CD4-positive, alpha-beta memory T cell (primary cell): ENCODE measurements at regions of chr22 and their contacts with region 1.

Region 1: DNA sequence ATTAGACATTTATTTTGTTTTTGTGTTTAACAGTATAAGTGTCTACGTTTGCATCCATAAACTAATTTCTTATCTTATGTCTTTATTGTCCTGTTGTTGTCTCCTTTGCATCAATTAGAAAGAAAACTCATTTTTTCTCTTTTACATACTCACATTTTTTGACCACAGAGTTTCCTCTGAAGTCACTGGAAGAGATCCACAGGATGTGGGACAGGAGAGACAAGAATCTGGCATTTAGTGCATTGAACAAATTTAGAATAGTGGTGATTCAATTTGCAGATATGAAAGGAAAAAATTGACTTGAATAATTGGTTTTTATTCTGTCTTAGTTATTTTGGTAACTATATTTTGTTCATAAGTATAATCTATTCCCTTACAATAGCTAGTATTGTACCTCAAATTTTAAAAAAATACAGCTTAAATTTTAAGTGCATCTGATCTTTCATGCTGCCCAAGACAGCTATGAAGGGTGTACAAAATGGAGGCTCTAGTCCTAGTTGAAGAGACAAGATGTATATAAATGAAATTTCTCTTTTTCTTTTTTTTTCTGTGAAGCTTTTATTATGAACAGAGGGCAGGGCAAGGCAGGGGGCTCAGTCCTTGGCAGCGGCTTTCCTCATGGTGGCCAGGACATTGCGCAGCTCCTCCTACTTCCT is 24.4 kb downstream of the HORMAD2 start:
- DNase-seq: peak in 4 of 5 donors; percentile 43 to 64 (median 48)
- H3K4me3 ChIP-seq: no peak overlapping the region
- H3K4me3 Mint-ChIP-seq: peak overlapping the region in 3 of 8 donors; percentile 45 to 78 (median 61)
- H3K27ac ChIP-seq: no peak overlapping the region
- H3K27ac Mint-ChIP-seq: peak overlapping the region in 6 of 7 donors; percentile 6 to 83 (median 50)
- H3K4me1 ChIP-seq: peaks cover 33% of the 10 kb centered on the region
- H3K4me1 Mint-ChIP-seq: peaks cover 21 to 50% (median 34%) of the 10 kb centered on the region in 4 donors
- H3K27me3 ChIP-seq: no peaks in the 10 kb centered on the region
- H3K27me3 Mint-ChIP-seq: no peaks in the 10 kb centered on the region

Region 2: GRCh38 chr22:30121960-30122359 is 17.3 kb after region 1 on chr22:
- CTCF ChIA-PET with region 1: interaction called, 20 read pairs
- POLR2A ChIA-PET with region 1: interaction called, 3 read pairs
- intact Hi-C with region 1: no loop called
- DNase-seq: no peak
- H3K4me3 ChIP-seq: no peak overlapping the region
- H3K4me3 Mint-ChIP-seq: peak overlapping the region in 2 of 8 donors; percentile 4 to 60
- H3K27ac ChIP-seq: no peak overlapping the region
- H3K27ac Mint-ChIP-seq: peak overlapping the region in 1 of 7 donors; percentile 3
- H3K4me1 ChIP-seq: no peaks in the 10 kb centered on the region
- H3K4me1 Mint-ChIP-seq: peaks cover 4 to 11% (median 7%) of the 10 kb centered on the region in 4 donors
- H3K27me3 ChIP-seq: no peaks in the 10 kb centered on the region
- H3K27me3 Mint-ChIP-seq: peaks cover 0 to 1% of the 10 kb centered on the region in 2 donors

Region 3: GRCh38 chr22:30183861-30184278 is 79.2 kb after region 1 on chr22:
- CTCF ChIA-PET with region 1: interaction called, 10 read pairs
- POLR2A ChIA-PET with region 1: interaction called, 4 read pairs
- intact Hi-C with region 1: no loop called
- DNase-seq: no peak
- H3K4me3 ChIP-seq: no peak overlapping the region
- H3K4me3 Mint-ChIP-seq: peak overlapping the region in 1 of 8 donors; percentile 13
- H3K27ac ChIP-seq: no peak overlapping the region
- H3K27ac Mint-ChIP-seq: peak overlapping the region in 4 of 7 donors; percentile 12 to 47 (median 34)
- H3K4me1 ChIP-seq: peaks cover 72% of the 10 kb centered on the region
- H3K4me1 Mint-ChIP-seq: peaks cover 36 to 78% (median 50%) of the 10 kb centered on the region in 4 donors
- H3K27me3 ChIP-seq: no peaks in the 10 kb centered on the region
- H3K27me3 Mint-ChIP-seq: no peaks in the 10 kb centered on the region

Region 4: GRCh38 chr22:30245985-30246901 is 141.6 kb after region 1 on chr22 and contains the start of gene LIF:
- CTCF ChIA-PET with region 1: interaction called, 6 read pairs
- POLR2A ChIA-PET with region 1: interaction called, 3 read pairs
- intact Hi-C with region 1: loop called (anchors 1 kb)
- DNase-seq: peak; percentile 42 to 57 (median 53)
- H3K4me3 ChIP-seq: peak within 1 kb of the TSS; percentile 42 to 69
- H3K4me3 Mint-ChIP-seq: peak within 1 kb of the TSS; percentile 84 to 98 (median 88)
- H3K27ac ChIP-seq: peak within 1 kb of the TSS; percentile 15
- H3K27ac Mint-ChIP-seq: peak within 1 kb of the TSS in 5 of 7 donors; percentile 45 to 86 (median 67)
- H3K4me1 ChIP-seq: peaks cover 43% of the 10 kb centered on the region
- H3K4me1 Mint-ChIP-seq: peaks cover 30 to 66% (median 42%) of the 10 kb centered on the region in 4 donors
- H3K27me3 ChIP-seq: no peaks in the 10 kb centered on the region
- H3K27me3 Mint-ChIP-seq: peaks cover 2 to 8% of the 10 kb centered on the region in 2 donors
- total RNA-seq, gene LIF: 0.26 to 0.58 TPM

Region 5: GRCh38 chr22:30253205-30253852 is 148.7 kb after region 1 on chr22:
- CTCF ChIA-PET with region 1: interaction called, 15 read pairs
- POLR2A ChIA-PET with region 1: no interaction called
- intact Hi-C with region 1: no loop called
- DNase-seq: no peak
- H3K4me3 ChIP-seq: no peak overlapping the region
- H3K4me3 Mint-ChIP-seq: no peak overlapping the region
- H3K27ac ChIP-seq: no peak overlapping the region
- H3K27ac Mint-ChIP-seq: peak overlapping the region in 1 of 7 donors; percentile 85
- H3K4me1 ChIP-seq: peaks cover 5% of the 10 kb centered on the region
- H3K4me1 Mint-ChIP-seq: peaks cover 10 to 17% (median 10%) of the 10 kb centered on the region in 4 donors
- H3K27me3 ChIP-seq: no peaks in the 10 kb centered on the region
- H3K27me3 Mint-ChIP-seq: peaks cover 0 to 3% of the 10 kb centered on the region in 2 donors

Region 6: DNA sequence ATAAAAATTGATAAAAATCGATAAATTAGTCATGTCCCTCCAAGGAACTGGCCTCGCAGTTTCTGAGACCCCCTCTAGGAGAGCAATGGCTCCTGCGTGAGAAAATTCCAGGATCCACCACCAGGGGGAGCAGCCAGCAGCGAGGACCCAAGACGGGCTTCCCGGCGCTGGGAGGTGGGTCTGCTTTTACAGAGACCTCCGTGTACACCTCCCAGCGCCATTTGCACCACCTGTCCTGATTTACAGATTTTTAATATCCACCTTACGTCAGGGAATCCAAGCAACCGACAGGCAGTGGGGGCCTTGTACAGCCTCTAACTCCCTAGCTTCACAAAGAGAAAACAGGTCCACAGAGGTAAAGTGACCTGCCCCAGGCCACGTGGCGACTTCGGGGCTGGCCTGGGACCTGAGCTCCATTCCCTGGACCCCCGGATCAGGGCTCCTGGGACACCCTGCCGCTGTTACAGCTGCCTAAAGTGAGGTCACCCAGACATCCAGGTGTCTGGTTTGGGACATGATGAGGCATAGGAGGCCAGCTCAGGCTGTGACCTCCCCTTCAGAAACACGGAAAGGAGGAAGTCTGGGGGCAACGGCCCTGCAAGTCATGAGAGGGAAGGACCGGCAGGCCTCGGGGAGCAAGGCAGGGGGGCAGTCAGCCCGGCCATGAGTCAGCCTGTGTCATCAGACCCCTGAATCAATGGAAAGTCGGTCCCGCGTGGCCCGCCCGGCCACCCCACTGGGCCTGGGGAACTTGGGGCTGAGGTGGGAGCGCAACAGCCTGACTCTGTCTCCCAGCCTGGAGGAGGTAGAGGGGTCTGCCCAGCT is 158.5 kb after region 1 on chr22:
- CTCF ChIA-PET with region 1: interaction called, 60 read pairs
- POLR2A ChIA-PET with region 1: interaction called, 3 read pairs
- intact Hi-C with region 1: loop called (anchors 1 kb)
- DNase-seq: peak; percentile 64 to 76 (median 68)
- H3K4me3 ChIP-seq: peak overlapping the region in 1 of 2 donors; percentile 24
- H3K4me3 Mint-ChIP-seq: peak overlapping the region; percentile 70 to 83 (median 74)
- H3K27ac ChIP-seq: peak overlapping the region; percentile 36
- H3K27ac Mint-ChIP-seq: peak overlapping the region; percentile 61 to 90 (median 86)
- H3K4me1 ChIP-seq: peaks cover 48% of the 10 kb centered on the region
- H3K4me1 Mint-ChIP-seq: peaks cover 24 to 56% (median 42%) of the 10 kb centered on the region in 4 donors
- H3K27me3 ChIP-seq: no peaks in the 10 kb centered on the region
- H3K27me3 Mint-ChIP-seq: no peaks in the 10 kb centered on the region